K562 (cell line): ENCODE measurements at regions of chr7 and their contacts with region 1.

Region 1: GRCh38 chr7:149655784-149656183 is 117.6 kb downstream of the ZNF467 start:
- DNase-seq: no peak
- ATAC-seq: no peak
- H3K4me3 ChIP-seq: no peak overlapping the region
- H3K27ac ChIP-seq: no peak overlapping the region
- H3K4me1 ChIP-seq: no peaks in the 10 kb centered on the region
- H3K27me3 ChIP-seq: no peaks in the 10 kb centered on the region; a peak in 2 of 5 replicates
- CTCF ChIP-seq: no peak
- EP300 ChIP-seq: no peak
- POLR2A ChIP-seq: no peak
- RAD21 ChIP-seq: no peak

Region 2: DNA sequence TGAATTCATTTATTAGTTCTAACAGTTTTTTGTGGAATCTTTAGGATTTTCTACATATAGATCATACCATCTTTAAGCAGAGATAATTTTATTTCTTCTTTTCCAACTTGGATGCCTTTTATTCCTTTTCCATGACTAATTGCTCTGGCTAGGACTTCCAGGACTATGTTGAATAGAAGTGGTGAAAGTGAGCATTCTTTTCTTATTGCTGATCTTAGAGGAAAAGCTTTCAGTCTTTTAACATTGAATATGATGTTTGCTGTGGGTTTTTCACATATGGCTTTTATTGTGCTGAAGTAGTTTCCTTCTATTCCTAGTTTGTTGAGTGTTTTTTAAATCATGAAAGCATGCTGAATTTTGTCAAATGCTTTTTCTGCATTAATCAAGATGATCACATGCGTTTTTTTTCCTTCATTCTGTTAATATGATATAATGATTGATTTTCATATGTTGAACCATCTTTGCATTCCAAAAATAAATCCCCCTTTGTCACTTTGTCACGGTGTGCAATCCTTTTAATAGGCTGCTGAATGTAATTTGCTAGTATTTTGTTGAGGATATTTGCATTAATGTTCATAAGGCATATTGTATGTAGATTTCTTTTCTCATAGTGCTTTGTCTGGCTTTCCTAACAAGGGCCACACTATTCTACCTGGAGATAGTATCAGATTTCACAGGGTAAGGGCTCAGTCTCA is 24.7 kb after region 1 on chr7:
- CTCF ChIA-PET with region 1: no interaction called
- POLR2A ChIA-PET with region 1: interaction called, 4 read pairs
- in situ Hi-C with region 1: no loop called
- intact Hi-C with region 1: loop called (anchors 2 kb)
- DNase-seq: no peak
- ATAC-seq: no peak
- H3K4me3 ChIP-seq: no peak overlapping the region
- H3K27ac ChIP-seq: no peak overlapping the region
- H3K4me1 ChIP-seq: no peaks in the 10 kb centered on the region
- H3K27me3 ChIP-seq: peaks cover 14 to 15% of the 10 kb centered on the region in 2 experiments
- CTCF ChIP-seq: no peak
- EP300 ChIP-seq: no peak
- POLR2A ChIP-seq: no peak
- RAD21 ChIP-seq: no peak